CD14-positive monocyte (primary cell): ENCODE measurements at regions of chr18 and their contacts with region 1.

Region 1: DNA sequence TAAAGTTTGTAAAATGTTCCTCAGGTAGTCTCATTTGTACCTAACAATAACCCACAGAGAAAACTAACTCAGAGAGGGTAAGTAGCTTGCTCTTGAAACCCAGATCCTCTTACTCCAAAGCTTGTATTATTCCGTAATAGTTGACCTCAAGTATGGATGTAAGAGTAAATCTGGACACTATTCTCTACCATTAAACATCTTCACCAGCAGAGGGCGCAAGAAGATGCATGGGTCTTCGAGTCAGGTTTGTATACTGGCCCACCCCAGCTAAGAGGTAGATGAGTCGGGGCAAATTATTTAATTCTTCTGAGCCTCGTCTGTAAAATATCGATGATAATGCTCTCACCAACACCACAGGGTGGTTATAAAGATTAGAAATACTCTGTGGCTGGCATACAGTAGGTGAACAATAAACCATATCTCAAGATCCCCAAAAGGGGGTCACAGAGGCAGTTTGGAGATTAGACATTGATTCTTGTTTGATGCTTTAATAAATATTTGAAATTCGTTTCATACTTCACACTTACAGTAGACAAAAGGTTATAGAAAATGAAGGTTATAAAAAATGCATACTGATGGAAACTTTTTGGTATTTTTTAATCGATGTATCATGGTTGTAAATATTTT is 3.5 kb upstream of the CABLES1 start:
- DNase-seq: peak; percentile 57 to 76 (median 71)
- H3K4me3 ChIP-seq: no peak overlapping the region
- H3K4me3 Mint-ChIP-seq: peak overlapping the region in 1 of 2 donors; percentile 16
- H3K27ac ChIP-seq: no peak overlapping the region
- H3K27ac Mint-ChIP-seq: no peak overlapping the region
- H3K4me1 ChIP-seq: peaks cover 14 to 21% of the 10 kb centered on the region in 2 donors
- H3K4me1 Mint-ChIP-seq: peaks cover 17% of the 10 kb centered on the region
- H3K27me3 ChIP-seq: peaks cover 21 to 28% of the 10 kb centered on the region in 2 donors
- H3K27me3 Mint-ChIP-seq: peaks cover 31 to 40% (median 36%) of the 10 kb centered on the region in 3 donors
- CTCF ChIP-seq: peak; percentile 85

Region 2: DNA sequence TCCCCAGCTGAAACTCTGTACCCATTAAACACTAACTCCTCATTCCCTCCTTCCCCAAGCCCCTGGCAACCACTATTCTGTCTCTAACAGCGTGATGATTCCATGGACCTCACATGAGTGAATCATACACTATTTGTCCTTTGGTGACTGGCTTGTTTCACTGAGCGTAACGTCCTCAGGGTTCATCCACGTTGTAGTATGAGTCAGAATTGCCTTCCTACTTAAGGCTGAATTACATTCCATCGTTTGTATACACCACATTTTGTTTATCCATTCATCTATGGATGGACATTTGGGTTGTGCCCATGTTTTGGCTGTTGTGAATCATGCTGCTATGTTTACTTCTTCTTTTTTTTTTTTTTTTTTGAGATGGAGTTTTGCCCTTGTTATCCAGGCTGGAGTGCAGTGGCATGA is 16.1 kb before region 1 on chr18:
- intact Hi-C with region 1: no loop called
- DNase-seq: no peak
- H3K4me3 ChIP-seq: no peak overlapping the region
- H3K4me3 Mint-ChIP-seq: no peak overlapping the region
- H3K27ac ChIP-seq: no peak overlapping the region
- H3K27ac Mint-ChIP-seq: no peak overlapping the region
- H3K4me1 ChIP-seq: no peaks in the 10 kb centered on the region
- H3K4me1 Mint-ChIP-seq: peaks cover 5% of the 10 kb centered on the region
- H3K27me3 ChIP-seq: peaks cover 0 to 6% of the 10 kb centered on the region in 2 donors
- H3K27me3 Mint-ChIP-seq: peaks cover 1 to 19% (median 6%) of the 10 kb centered on the region in 3 donors
- CTCF ChIP-seq: no peak

Region 3: GRCh38 chr18:23231340-23232021 is 99.7 kb after region 1 on chr18:
- intact Hi-C with region 1: loop called in 1 of 2 experiments (anchors 10 kb)
- DNase-seq: peak; percentile 97 to 100 (median 99)
- H3K4me3 ChIP-seq: peak overlapping the region in 1 of 3 experiments; percentile 17
- H3K4me3 Mint-ChIP-seq: peak overlapping the region; percentile 61 to 81
- H3K27ac ChIP-seq: peak overlapping the region; percentile 72 to 77
- H3K27ac Mint-ChIP-seq: peak overlapping the region; percentile 94 to 98 (median 97)
- H3K4me1 ChIP-seq: peaks cover 22 to 32% of the 10 kb centered on the region in 2 donors
- H3K4me1 Mint-ChIP-seq: peaks cover 52% of the 10 kb centered on the region
- H3K27me3 ChIP-seq: no peaks in the 10 kb centered on the region
- H3K27me3 Mint-ChIP-seq: peaks cover 0 to 7% (median 6%) of the 10 kb centered on the region in 3 donors
- CTCF ChIP-seq: no peak

Region 4: GRCh38 chr18:23259701-23260582 is 128.1 kb after region 1 on chr18:
- intact Hi-C with region 1: loop called in 1 of 2 experiments (anchors 10 kb)
- DNase-seq: peak; percentile 64 to 80 (median 70)
- H3K4me3 ChIP-seq: peak overlapping the region in 1 of 3 experiments; percentile 46
- H3K4me3 Mint-ChIP-seq: peak overlapping the region; percentile 50 to 86
- H3K27ac ChIP-seq: peak overlapping the region in 1 of 2 donors; percentile 3
- H3K27ac Mint-ChIP-seq: peak overlapping the region; percentile 28 to 92 (median 80)
- H3K4me1 ChIP-seq: peaks cover 32 to 36% of the 10 kb centered on the region in 2 donors
- H3K4me1 Mint-ChIP-seq: peaks cover 37% of the 10 kb centered on the region
- H3K27me3 ChIP-seq: no peaks in the 10 kb centered on the region
- H3K27me3 Mint-ChIP-seq: peaks cover 0 to 19% (median 6%) of the 10 kb centered on the region in 3 donors
- CTCF ChIP-seq: no peak

Region 5: DNA sequence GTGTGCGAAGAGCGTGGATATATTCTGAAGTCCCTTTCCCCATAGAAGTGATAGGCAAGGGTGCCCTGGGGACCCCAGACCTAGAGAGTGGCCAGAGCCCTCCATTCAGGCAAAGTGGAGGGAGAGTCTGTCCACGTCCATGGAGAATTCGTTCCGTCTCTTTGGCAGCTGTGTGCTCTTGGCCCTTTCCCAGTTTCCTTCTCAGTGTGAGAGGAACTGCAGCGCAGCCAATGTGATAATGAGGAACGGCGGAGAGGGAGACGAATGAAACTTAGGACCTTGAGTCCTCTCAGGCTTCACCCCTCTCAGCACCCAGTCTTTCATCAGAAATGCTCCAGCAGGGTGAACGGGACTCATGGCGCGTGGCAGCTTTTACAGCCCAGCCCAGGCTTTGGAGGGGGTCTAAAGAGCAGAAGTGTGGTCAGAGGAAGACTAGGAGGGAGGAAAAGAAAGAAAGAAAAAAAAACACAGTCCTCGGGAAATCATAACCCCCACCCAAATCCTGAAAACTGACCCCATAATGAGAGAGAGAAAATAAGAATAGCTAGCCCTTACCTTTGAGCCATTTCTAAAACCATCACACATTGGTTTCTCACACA is 226.3 kb after region 1 on chr18:
- intact Hi-C with region 1: loop called in 1 of 2 experiments (anchors 1 kb)
- DNase-seq: peak in 1 of 3 donors; percentile 7
- H3K4me3 ChIP-seq: peak overlapping the region in 1 of 3 experiments; percentile 32
- H3K4me3 Mint-ChIP-seq: peak overlapping the region; percentile 20 to 83
- H3K27ac ChIP-seq: no peak overlapping the region
- H3K27ac Mint-ChIP-seq: peak overlapping the region in 3 of 7 donors; percentile 8 to 74 (median 63)
- H3K4me1 ChIP-seq: peaks cover 10 to 20% of the 10 kb centered on the region in 2 donors
- H3K4me1 Mint-ChIP-seq: peaks cover 30% of the 10 kb centered on the region
- H3K27me3 ChIP-seq: no peaks in the 10 kb centered on the region
- H3K27me3 Mint-ChIP-seq: peaks cover 0 to 2% (median 0%) of the 10 kb centered on the region in 3 donors
- CTCF ChIP-seq: no peak

Region 6: DNA sequence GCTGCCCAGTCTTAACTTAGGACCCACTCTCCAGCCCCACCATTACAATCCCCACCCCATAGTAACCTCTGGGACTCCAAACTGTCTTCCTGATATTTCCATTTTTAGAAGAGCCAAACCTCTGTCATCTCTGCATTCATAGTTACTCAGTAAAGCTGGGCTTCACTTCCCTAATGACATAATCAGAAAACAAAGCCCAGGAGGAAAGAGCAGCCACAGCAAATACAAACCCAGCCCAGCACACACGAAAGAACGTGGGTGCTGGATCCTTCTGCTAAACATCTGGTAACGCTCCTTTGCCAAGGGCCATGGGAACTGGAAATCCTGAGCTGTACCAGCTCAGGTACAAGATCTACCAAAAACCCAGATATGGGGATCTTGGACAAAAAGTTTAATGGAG is 284.5 kb after region 1 on chr18:
- intact Hi-C with region 1: loop called (anchors 5 kb)
- DNase-seq: peak; percentile 12 to 35 (median 26)
- H3K4me3 ChIP-seq: peak overlapping the region in 1 of 3 experiments; percentile 17
- H3K4me3 Mint-ChIP-seq: peak overlapping the region in 1 of 2 donors; percentile 56
- H3K27ac ChIP-seq: peak overlapping the region in 1 of 2 donors; percentile 52
- H3K27ac Mint-ChIP-seq: peak overlapping the region in 6 of 7 donors; percentile 27 to 88 (median 78)
- H3K4me1 ChIP-seq: peaks cover 16 to 20% of the 10 kb centered on the region in 2 donors
- H3K4me1 Mint-ChIP-seq: peaks cover 20% of the 10 kb centered on the region
- H3K27me3 ChIP-seq: no peaks in the 10 kb centered on the region
- H3K27me3 Mint-ChIP-seq: no peaks in the 10 kb centered on the region
- CTCF ChIP-seq: no peak